IMR-90 (cell line): ENCODE measurements at regions of chr3 and their contacts with region 1.

Region 1: DNA sequence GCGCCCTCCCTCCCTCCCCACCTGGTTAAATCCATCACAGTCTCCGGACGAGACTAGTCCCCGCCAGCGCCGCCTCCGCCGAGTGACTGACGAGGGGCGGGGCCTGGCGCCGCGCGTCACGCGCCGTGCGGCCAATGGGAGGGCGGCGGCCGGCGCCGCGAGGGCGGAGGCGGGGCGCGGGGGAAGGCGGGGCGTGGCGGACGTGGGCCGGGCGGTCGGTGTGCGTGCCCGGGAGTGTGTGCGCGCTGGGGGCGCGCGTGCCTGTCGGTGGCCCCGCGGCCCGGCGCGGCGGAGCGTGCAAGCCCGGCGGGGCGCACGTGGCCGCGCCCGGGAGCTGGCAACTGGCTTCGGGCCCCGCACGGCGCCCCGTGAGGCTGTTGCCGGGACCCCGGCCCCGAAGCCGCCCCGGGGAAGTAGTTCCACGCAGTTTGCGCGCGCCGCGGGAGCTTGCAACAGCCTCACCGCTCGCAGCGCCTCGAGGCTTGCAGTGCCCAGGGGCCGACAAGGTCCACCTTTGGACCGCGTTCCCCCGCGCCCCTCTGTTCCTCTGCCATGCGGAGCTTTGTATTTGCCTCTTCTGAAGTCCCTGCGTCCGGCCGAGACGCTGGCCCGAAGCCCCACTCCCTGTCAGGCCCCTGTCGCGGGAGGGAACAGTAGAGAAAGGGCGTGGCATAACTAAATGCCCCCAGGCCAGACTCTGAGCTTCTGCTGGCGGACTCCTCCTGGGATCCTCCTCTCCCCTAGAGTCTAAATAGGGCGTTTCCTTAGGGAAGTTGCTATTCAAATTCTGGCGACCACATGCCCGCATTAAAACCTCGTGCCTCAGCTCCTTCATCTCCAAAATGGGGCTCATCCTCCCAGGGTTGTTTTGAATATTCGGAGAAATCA is 400.9 kb downstream of the SHQ1 start:
- DNase-seq: peak; percentile 86
- ATAC-seq: peak; percentile 99
- H3K4me3 ChIP-seq: peak overlapping the region; percentile 98
- H3K27ac ChIP-seq: peak overlapping the region; percentile 84
- H3K4me1 ChIP-seq: peaks cover 2% of the 10 kb centered on the region; the same call in 1 of the 2 replicates
- H3K27me3 ChIP-seq: peaks cover 17% of the 10 kb centered on the region
- CTCF ChIP-seq: no peak
- POLR2A ChIP-seq: 0 out of 2 replicates have a peak, but pooled peaks have one; percentile 25
- RAD21 ChIP-seq: no peak

Region 2: DNA sequence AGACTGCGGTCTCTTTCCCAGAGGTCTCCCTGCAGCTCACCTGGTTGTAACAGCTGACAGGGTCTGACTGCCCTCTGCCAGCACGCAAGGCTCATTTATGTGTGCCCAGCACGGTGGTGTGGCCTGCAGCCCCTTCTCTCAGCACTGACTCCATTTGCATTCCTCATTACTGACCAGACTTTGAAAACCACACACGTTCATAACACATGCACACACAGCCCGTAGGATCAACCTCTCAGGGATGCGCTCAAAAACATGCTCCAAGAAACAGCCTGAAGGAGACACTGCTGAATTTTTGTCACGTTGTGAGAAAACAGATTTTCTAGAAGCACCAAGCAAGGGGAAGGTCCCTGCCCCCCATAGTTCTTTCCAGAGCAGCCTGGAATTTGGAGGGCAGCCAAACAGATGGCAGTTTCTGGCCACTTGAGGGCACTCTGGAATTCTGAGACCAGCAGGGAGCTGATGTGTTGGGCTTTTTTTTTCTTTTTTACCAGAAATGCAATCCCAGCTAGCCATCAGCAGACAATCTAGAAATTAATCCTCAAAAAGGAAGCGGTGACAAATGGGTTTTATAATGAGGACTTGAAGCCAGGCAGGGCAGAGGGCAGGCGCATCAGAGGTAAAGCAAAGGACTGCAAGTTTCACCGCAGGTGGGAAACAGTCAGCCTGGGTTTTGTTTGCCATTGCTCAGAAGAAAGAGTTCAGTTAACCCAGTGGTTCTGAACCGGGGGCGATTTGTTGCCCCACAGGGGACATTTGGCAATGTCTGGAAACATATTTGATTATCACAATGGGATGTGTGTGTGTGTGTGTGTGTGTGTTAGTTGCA is 491.8 kb before region 1 on chr3:
- CTCF ChIA-PET with region 1: no interaction called
- POLR2A ChIA-PET with region 1: no interaction called
- dilution Hi-C with region 1: no loop called
- in situ Hi-C with region 1: no loop called
- intact Hi-C with region 1: loop called (anchors 2 kb)
- DNase-seq: peak; percentile 70
- ATAC-seq: peak; percentile 85
- H3K4me3 ChIP-seq: no peak overlapping the region
- H3K27ac ChIP-seq: no peak overlapping the region
- H3K4me1 ChIP-seq: no peaks in the 10 kb centered on the region
- H3K27me3 ChIP-seq: peaks cover 12% of the 10 kb centered on the region
- CTCF ChIP-seq: peak; percentile 74
- POLR2A ChIP-seq: no peak
- RAD21 ChIP-seq: peak; percentile 87

Region 3: DNA sequence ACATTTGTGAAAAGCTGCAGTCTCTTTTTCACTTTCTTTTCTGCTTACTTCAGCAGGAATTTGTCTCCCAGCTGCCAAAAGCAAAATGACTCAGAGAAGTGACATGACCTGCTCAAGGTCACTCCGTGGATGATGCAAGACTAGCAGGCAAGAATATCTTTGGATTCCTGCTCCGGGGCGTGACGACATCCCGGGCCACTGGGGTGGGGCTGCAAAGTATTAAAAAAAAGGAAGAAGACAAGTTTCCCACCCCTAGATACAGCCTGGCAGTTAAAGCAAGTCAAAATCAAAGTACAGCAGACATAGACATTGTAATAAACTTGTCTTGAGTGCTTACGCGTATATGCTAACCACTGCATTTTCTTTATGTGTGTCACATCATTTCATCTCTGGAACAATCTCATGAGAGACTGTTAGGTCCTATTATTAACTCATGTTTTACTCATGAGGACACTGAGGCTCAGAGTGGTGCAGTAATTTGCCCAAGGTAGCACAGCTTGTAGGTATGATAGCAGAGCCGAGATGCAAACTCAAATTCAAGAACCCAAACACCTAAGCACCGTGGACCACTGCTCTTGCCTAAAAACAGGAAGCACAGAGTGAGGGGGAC is 177.1 kb before region 1 on chr3:
- CTCF ChIA-PET with region 1: no interaction called
- POLR2A ChIA-PET with region 1: no interaction called
- dilution Hi-C with region 1: no loop called
- in situ Hi-C with region 1: no loop called
- intact Hi-C with region 1: loop called (anchors 2 kb)
- DNase-seq: peak; percentile 96
- ATAC-seq: peak; percentile 41
- H3K4me3 ChIP-seq: no peak overlapping the region
- H3K27ac ChIP-seq: peak overlapping the region; percentile 2; the same call in 1 of the 2 replicates
- H3K4me1 ChIP-seq: peaks cover 21% of the 10 kb centered on the region
- H3K27me3 ChIP-seq: peaks cover 7% of the 10 kb centered on the region
- CTCF ChIP-seq: no peak
- POLR2A ChIP-seq: no peak
- RAD21 ChIP-seq: no peak; the same call in 1 of the 2 replicates

Region 4: DNA sequence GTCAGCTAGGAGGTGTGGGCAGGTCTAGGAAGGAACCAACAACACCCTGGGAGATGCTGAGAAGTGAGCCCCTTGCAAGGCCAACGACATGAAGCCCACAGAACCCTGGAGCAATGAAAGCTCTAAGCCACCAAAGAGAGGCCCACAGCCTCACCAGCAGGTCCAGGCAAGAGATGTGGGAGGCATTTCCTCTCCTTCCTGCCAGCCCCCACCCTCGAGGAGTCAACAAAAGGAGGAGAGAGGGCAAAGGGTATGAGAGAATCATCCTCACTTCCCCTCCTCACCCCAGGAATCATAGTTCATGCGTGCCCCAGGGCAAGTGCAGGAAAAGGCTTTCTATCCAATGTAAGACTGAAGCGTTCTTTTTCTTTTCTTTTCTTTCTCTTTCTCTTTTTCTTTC is 205.1 kb after region 1 on chr3:
- CTCF ChIA-PET with region 1: no interaction called
- POLR2A ChIA-PET with region 1: no interaction called
- dilution Hi-C with region 1: no loop called
- in situ Hi-C with region 1: no loop called
- intact Hi-C with region 1: loop called (anchors 5 kb)
- DNase-seq: no peak
- ATAC-seq: no peak
- H3K4me3 ChIP-seq: no peak overlapping the region
- H3K27ac ChIP-seq: no peak overlapping the region
- H3K4me1 ChIP-seq: no peaks in the 10 kb centered on the region
- H3K27me3 ChIP-seq: peaks cover 25% of the 10 kb centered on the region
- CTCF ChIP-seq: no peak
- POLR2A ChIP-seq: no peak
- RAD21 ChIP-seq: no peak

Region 5: GRCh38 chr3:73086071-73086494 is 638.8 kb after region 1 on chr3:
- CTCF ChIA-PET with region 1: no interaction called
- POLR2A ChIA-PET with region 1: no interaction called
- dilution Hi-C with region 1: no loop called
- in situ Hi-C with region 1: loop called (anchors 25 kb)
- intact Hi-C with region 1: no loop called
- DNase-seq: peak; percentile 43
- ATAC-seq: peak; percentile 92
- H3K4me3 ChIP-seq: no peak overlapping the region
- H3K27ac ChIP-seq: no peak overlapping the region
- H3K4me1 ChIP-seq: peaks cover 2% of the 10 kb centered on the region; the same call in 1 of the 2 replicates
- H3K27me3 ChIP-seq: peaks cover 5% of the 10 kb centered on the region; the same call in 1 of the 2 replicates
- CTCF ChIP-seq: peak; percentile 92
- POLR2A ChIP-seq: no peak
- RAD21 ChIP-seq: peak; percentile 94

Region 6: DNA sequence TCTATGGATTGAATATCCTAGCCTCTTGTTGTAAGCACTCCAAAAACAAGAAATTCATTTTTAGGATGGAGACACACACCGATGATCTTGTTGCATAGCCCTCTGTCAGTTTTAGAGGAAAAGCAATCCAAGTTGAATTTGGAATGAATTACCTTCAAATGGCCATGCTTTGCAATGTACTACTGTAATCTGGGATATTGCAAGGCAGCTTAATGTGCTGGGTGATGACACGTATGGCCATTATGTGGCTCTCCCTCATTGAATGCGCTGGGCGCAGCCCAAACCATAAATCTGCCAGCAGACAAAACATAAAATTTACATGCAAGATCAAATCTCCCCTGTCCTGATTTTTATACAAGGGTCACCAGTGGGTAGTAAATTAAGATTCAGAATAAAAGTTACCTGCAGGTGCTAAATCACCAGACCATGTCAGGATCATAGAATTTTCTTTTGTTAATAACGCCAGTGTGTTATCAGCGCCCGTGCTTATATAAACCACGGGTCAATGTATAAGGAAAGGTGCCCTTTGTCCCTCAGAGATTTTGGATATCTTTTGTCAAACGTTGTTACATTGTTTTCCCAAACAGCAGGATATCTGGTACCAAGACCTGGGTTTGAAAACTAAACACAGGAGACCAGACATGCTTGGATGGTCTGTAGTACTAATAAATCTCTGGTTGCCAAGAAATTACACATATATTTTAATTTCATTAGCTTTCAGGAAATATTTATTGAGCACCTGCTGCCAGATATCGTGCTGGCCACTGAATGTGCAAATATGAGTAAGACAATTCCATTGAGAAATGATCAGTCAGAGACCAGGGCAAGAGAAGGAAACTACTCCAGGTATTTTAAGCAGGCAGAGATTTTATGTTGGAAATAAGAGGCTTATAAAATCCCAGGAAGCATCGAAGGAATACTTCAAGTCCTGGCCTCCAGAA is 851.2 kb after region 1 on chr3:
- CTCF ChIA-PET with region 1: no interaction called
- POLR2A ChIA-PET with region 1: no interaction called
- dilution Hi-C with region 1: no loop called
- in situ Hi-C with region 1: no loop called
- intact Hi-C with region 1: no loop called
- DNase-seq: no peak
- ATAC-seq: no peak
- H3K4me3 ChIP-seq: no peak overlapping the region
- H3K27ac ChIP-seq: no peak overlapping the region
- H3K4me1 ChIP-seq: no peaks in the 10 kb centered on the region
- H3K27me3 ChIP-seq: peaks cover 3% of the 10 kb centered on the region; the same call in 1 of the 2 replicates
- CTCF ChIP-seq: no peak
- POLR2A ChIP-seq: no peak
- RAD21 ChIP-seq: no peak